Posterior vena cava (tissue), 2 donors: ENCODE measurements at regions of chr2 and their contacts with region 1.

Region 1: DNA sequence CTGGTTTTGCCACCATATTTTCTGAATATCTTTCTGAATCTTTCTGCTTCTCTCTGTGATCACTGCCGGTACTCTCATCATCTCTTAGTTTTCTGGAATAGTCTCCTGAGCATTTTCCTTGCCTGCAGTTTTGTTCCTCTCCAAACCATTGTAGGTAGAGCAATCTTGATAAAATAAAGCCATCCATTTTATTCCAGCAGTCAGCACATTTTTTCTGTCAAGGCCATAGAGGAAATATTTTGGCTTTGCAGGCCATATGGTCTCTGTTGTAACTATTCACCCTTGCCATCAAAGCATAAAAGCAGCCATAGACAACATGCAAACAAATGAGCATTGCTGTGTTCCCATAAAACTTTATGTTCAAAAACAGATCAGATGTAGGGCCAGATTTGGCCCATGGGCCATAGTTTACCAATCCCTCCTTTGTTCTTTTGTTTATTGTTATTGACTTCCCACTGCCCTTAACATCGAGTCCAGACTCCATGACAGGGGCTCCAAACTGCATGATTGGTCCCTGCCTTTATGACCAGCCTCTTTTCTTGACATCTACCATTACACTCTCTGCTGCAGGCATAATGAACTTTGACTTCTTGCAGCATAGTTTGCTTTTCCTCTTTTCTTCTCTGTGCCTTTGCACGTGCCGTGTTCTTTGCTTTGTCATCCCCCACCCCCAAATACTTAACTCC is 29.8 kb downstream of the TMEM87B start:
- DNase-seq: no peak

Region 2: GRCh38 chr2:110768604-110769003 is 1316.2 kb before region 1 on chr2:
- intact Hi-C with region 1: loop called in 1 of 2 experiments (anchors 5 kb)
- DNase-seq: no peak

Region 3: GRCh38 chr2:112096098-112096497 is 11.3 kb after region 1 on chr2:
- intact Hi-C with region 1: no loop called
- DNase-seq: no peak

Region 4: DNA sequence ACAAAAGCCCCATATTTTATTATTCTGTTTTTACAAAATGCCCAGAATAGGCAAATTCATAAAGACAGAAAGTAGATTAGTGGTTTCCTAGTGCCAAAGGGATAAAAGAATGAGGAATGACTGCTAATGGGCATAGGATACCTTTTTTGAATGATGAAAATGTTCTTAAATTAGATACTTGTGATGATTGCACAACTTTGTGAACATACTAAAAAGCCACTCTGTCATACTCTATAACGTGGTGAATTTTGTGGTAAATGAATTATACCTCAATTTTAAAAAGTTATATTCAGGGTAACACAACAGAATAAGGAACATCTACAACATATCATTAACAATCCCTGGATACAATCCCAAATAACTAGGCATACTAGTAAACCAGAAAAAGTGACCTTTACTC is 44.2 kb after region 1 on chr2:
- intact Hi-C with region 1: no loop called
- DNase-seq: no peak

Region 5: DNA sequence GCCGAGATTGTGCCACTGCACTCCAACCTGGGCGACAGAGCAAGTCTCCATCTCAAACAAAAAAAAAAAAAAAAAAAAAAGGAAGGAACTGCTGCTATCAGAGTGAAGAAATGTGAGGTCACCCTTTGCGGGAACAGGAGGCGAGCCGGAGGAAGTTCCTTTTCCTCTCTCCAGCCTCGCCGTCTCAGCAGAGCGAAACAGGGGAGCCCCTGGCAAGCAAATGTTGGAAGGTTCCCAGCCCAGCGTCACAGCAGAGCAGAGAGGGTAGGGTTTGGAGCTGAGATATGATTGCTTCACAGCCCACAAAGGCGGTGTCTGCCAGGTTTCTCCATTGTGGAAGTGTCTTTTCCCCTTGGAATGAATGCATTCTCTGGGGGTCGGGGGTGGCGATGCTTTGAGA is 589.4 kb after region 1 on chr2:
- intact Hi-C with region 1: loop called in 1 of 2 experiments (anchors 5 kb)
- DNase-seq: peak; percentile 94